ENCODE measurements at regions of chr17 and their contacts with region 1.

Region 1: DNA sequence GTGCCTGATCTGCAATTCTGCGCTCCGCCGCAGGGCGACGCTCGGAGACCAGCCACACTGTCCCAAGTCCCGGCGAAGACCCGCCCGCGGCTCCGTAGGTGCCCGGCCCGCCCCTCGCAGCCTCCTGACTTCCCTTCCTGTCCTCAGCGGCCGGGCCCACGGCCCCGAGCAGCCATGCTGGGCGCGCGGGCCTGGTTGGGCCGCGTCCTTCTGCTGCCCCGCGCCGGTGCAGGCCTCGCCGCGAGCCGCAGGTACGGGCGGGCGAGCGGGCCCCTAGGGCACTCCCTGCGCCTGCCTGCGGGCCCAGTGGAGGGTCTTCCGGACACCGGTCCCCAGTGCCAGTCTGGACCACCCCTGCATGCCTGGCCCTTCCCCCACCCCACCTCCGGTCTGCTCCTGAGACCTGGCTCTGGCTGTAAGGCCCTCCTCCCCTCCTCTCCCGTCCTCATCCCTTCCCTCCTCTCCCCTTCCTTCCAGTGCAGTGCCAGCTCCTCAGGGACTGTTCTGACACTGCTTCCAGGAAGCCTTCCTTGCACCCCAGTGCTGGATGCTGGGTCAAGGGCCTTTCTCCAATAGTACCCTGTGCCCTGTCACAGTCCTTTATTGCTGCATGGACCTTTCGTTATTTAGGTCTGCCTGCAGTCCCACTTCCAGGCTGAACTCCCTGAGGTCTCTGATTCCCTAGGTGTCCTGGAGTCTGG is at the start of gene SPATA20:
- DNase-seq: peak; percentile 84
- ATAC-seq: peak; percentile 87
- H3K4me3 ChIP-seq: peak within 1 kb of the TSS; percentile 70
- H3K27ac ChIP-seq: peak within 1 kb of the TSS; percentile 65
- H3K4me1 ChIP-seq: peaks cover 13% of the 10 kb centered on the region
- H3K27me3 ChIP-seq: no peaks in the 10 kb centered on the region
- CTCF ChIP-seq: peak; percentile 99
- POLR2A ChIP-seq: peak; percentile 68
- RAD21 ChIP-seq: peak; percentile 99
- total RNA-seq, gene SPATA20: 15.6 and 17.0 TPM in 2 replicates

Region 2: GRCh38 chr17:50478391-50479381 is 68.5 kb before region 1 on chr17 and contains the start of gene RSAD1:
- CTCF ChIA-PET with region 1: interaction called, 6 read pairs
- POLR2A ChIA-PET with region 1: no interaction called
- dilution Hi-C with region 1: no loop called
- in situ Hi-C with region 1: no loop called
- intact Hi-C with region 1: loop called (anchors 1 kb)
- DNase-seq: peak; percentile 88
- ATAC-seq: peak; percentile 83
- H3K4me3 ChIP-seq: peak within 1 kb of the TSS; percentile 86
- H3K27ac ChIP-seq: peak within 1 kb of the TSS; percentile 57
- H3K4me1 ChIP-seq: peaks cover 4% of the 10 kb centered on the region
- H3K27me3 ChIP-seq: no peaks in the 10 kb centered on the region; the same call in 1 of the 2 replicates
- CTCF ChIP-seq: peak; percentile 80
- POLR2A ChIP-seq: peak; percentile 86
- RAD21 ChIP-seq: peak; percentile 52
- total RNA-seq, gene RSAD1: 10.0 and 10.8 TPM in 2 replicates

Region 3: GRCh38 chr17:50638851-50639767 is 91.9 kb after region 1 on chr17:
- CTCF ChIA-PET with region 1: no interaction called
- POLR2A ChIA-PET with region 1: interaction called, 3 read pairs
- dilution Hi-C with region 1: no loop called
- in situ Hi-C with region 1: no loop called
- intact Hi-C with region 1: loop called (anchors 2 kb)
- DNase-seq: peak; percentile 97
- ATAC-seq: peak; percentile 79
- H3K4me3 ChIP-seq: no peak overlapping the region
- H3K27ac ChIP-seq: peak overlapping the region; percentile 75
- H3K4me1 ChIP-seq: peaks cover 45% of the 10 kb centered on the region
- H3K27me3 ChIP-seq: no peaks in the 10 kb centered on the region
- CTCF ChIP-seq: no peak
- POLR2A ChIP-seq: no peak
- RAD21 ChIP-seq: no peak

Region 4: DNA sequence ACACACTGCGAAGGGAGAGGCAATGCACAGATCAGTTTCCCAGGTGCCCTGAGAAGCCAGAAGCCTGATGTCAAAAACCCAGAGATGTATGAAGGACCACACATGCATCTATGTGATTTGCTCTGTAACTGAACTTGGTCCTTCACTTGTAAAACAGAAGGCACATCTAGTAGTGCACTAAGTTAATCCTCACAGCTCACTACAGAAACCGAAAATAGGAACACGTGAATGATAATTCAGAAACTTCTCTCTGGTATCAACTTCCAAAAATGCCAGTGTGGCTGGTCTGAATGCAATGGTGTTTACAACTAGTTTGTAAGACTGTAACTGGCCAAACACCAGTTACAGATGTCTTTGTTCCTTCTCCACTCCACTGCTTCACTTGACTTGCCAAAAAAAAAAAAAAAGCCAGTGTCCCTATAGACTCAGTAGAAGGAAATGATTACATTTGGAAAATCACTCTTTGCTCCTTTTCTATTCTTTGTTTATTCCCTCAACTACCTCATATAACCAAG is 149.2 kb after region 1 on chr17:
- CTCF ChIA-PET with region 1: interaction called, 28 read pairs
- POLR2A ChIA-PET with region 1: no interaction called
- dilution Hi-C with region 1: no loop called
- in situ Hi-C with region 1: loop called (anchors 5 kb)
- intact Hi-C with region 1: loop called (anchors 1 kb)
- DNase-seq: no peak
- ATAC-seq: no peak
- H3K4me3 ChIP-seq: no peak overlapping the region
- H3K27ac ChIP-seq: no peak overlapping the region; the same call in 1 of the 2 replicates
- H3K4me1 ChIP-seq: peaks cover 26% of the 10 kb centered on the region
- H3K27me3 ChIP-seq: no peaks in the 10 kb centered on the region
- CTCF ChIP-seq: no peak
- POLR2A ChIP-seq: no peak
- RAD21 ChIP-seq: no peak

Region 5: DNA sequence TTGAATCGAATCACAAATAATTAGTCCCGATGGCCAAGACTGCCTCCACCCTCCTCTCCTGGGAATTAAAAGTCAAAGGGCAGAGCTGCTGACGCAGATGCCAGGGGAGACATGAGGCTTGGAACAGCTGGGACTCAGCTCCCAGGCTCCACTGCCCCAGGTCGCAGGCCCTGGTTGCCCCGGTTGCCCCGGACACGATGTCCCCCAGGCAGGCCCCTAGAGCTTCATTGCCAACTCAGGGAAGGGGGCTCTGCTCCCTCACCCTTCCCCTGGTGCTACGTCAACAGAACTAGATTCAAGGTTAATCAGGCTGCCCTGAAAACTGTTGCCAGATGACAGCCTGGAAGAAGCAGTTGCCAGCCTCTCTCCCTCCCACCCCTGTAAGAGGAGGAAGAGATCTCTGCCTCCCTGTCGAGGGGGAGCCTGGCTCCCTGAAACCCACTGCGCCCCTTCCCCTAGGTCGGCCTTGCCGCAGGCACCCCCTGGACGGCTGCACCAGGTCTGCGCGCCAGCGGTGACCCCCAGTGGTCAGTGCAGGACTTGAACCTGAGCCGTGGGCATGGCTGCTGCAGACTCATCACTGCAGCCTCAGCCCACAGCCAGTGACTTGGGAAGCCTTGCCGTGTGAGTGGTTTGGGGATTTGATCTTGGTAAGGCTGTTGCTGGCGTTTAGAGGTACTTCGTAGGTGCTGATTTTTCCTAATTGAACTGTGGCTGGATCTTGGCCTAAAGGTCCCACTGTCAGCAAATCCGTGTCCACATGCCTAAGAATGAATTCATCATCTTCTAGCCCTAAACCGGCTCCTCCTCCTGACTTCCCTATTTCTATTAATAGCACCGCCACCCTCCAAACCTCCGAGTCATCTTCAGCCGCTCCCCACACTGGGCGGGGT is 403.1 kb after region 1 on chr17:
- CTCF ChIA-PET with region 1: no interaction called
- POLR2A ChIA-PET with region 1: no interaction called
- dilution Hi-C with region 1: no loop called
- in situ Hi-C with region 1: loop called (anchors 10 kb)
- intact Hi-C with region 1: loop called (anchors 10 kb)
- DNase-seq: peak; percentile 84
- ATAC-seq: peak; percentile 91
- H3K4me3 ChIP-seq: no peak overlapping the region
- H3K27ac ChIP-seq: peak overlapping the region; percentile 35
- H3K4me1 ChIP-seq: peaks cover 39% of the 10 kb centered on the region
- H3K27me3 ChIP-seq: no peaks in the 10 kb centered on the region
- CTCF ChIP-seq: peak; percentile 74
- POLR2A ChIP-seq: no peak
- RAD21 ChIP-seq: peak; percentile 84